Calu3 (cell line): ENCODE measurements at regions of chrX and their contacts with region 1.

Region 1: DNA sequence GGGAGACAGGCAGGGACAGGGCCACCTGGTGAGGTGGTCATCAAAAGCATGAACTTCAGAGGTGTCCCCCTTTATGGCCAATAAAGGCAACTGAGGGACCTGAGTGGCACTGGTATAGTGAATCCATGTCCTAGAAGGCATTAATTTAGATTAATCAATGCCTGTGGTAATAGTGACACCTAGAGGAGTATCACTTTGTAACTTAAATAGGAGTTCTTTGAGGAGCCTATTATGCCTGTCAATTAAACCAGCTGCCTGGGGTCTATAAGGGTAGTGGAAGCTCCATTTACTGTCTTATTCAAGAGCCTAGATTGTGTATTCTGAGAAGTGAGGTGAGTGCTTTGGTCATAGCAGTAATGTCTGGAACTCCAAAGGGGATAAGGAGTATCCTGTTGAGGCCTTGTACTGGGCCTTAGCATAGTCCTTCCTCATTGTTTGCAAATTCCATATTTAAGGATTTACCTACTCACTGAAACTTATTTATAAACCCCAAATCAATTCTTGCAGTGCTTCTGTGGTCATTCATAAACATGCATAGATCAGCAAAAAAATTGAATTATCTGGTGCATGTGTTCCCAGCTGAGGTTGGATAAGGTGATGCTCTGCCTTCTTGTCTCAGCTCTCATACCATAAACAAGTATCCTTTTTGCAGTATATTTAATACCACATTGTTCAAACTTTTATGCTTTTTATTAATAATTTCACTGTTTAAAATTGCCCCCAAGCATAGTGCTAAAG is 213.8 kb upstream of the RADX start:
- DNase-seq: no peak
- H3K4me3 Mint-ChIP-seq: no peak overlapping the region
- H3K27ac Mint-ChIP-seq: no peak overlapping the region
- H3K4me1 Mint-ChIP-seq: peaks cover 8% of the 10 kb centered on the region
- H3K27me3 Mint-ChIP-seq: no peaks in the 10 kb centered on the region
- CTCF ChIP-seq: peak; percentile 13

Region 2: DNA sequence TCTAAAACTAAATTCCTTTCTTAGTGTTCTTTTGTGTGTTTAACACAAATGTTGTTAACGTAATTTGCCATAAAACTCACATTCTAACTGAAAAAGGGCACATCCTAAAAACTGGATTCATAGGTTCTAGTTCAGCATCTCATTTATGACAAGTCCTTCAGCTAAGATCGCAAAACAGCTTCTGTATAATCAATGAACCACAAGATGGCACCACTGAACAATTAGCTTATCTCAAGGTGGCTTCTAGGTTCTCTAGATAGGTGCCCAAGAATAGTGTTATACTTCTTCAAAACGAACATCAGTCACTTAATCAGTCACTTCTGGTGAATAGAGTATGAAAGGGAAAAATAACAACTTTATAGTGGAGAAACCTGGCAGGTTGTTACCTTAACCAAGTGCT is 521.3 kb before region 1 on chrX:
- CTCF ChIA-PET with region 1: no interaction called
- intact Hi-C with region 1: loop called (anchors 5 kb)
- DNase-seq: no peak
- H3K4me3 Mint-ChIP-seq: no peak overlapping the region
- H3K27ac Mint-ChIP-seq: no peak overlapping the region
- H3K4me1 Mint-ChIP-seq: no peaks in the 10 kb centered on the region
- H3K27me3 Mint-ChIP-seq: no peaks in the 10 kb centered on the region
- CTCF ChIP-seq: no peak

Region 3: DNA sequence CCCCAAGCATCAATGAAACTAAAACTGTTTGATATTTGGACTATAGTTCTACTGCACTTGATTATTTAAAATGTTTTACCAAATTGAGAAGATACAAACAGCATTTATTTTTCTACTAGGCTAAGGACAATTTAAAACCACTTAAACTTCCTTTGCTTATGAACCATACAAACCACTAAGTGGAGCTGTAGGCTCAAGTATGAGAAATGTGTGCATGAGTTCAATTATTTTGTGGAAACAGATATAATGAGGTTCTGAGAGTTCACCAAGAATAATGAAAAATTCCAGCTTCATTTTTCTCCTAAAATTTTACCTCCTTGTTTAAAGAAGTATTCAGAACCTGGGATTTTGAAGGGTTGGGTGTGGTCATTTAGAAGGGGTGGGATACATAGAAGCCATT is 422.6 kb before region 1 on chrX:
- CTCF ChIA-PET with region 1: no interaction called
- intact Hi-C with region 1: loop called (anchors 1 kb)
- DNase-seq: no peak
- H3K4me3 Mint-ChIP-seq: no peak overlapping the region
- H3K27ac Mint-ChIP-seq: no peak overlapping the region
- H3K4me1 Mint-ChIP-seq: no peaks in the 10 kb centered on the region
- H3K27me3 Mint-ChIP-seq: no peaks in the 10 kb centered on the region
- CTCF ChIP-seq: no peak

Region 4: DNA sequence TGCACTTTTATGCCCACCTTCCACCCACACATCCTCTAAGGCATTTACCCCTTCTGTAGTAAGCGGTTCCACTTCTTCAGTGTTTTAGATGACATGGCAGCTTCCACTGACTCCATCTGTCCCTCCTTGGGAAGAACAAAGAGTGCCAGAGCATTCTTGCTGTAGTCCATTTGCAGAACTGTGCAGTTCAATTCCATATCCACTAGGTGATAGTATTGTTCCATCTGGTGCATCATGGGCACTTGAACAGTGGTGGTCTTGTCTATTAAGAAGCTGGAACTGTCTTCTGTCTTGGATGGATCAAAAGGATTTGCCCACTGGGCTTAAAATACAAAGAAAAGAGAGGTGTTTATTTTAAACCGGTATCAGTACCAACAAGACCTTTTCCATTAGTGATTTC is 362.9 kb before region 1 on chrX:
- CTCF ChIA-PET with region 1: interaction called, 3 read pairs
- intact Hi-C with region 1: loop called (anchors 2 kb)
- DNase-seq: no peak
- H3K4me3 Mint-ChIP-seq: no peak overlapping the region
- H3K27ac Mint-ChIP-seq: no peak overlapping the region
- H3K4me1 Mint-ChIP-seq: no peaks in the 10 kb centered on the region
- H3K27me3 Mint-ChIP-seq: peaks cover 20% of the 10 kb centered on the region
- CTCF ChIP-seq: no peak

Region 5: GRCh38 chrX:106050054-106050453 is 347.9 kb before region 1 on chrX:
- CTCF ChIA-PET with region 1: no interaction called
- intact Hi-C with region 1: no loop called
- DNase-seq: no peak
- H3K4me3 Mint-ChIP-seq: no peak overlapping the region
- H3K27ac Mint-ChIP-seq: no peak overlapping the region
- H3K4me1 Mint-ChIP-seq: no peaks in the 10 kb centered on the region
- H3K27me3 Mint-ChIP-seq: no peaks in the 10 kb centered on the region
- CTCF ChIP-seq: no peak

Region 6: DNA sequence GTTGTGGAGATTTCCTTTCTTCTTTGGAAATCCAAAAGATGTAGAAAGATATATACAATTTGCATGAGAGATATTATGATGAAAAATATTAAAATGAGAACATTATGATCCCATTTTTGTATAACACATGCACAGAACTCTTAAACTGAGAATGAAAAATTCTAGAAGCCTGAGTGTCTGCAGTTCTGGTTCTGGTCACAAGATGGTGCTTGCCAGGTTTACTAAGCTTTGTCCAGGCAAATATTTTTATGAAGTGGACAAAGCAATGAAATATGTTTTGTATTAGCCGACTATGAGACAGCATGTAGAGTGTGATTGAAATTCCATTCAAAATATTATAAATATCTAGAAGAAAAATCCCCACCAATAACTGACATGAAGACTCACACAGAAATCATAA is 227.7 kb before region 1 on chrX:
- CTCF ChIA-PET with region 1: no interaction called
- intact Hi-C with region 1: loop called (anchors 1 kb)
- DNase-seq: peak; percentile 12
- H3K4me3 Mint-ChIP-seq: no peak overlapping the region
- H3K27ac Mint-ChIP-seq: no peak overlapping the region
- H3K4me1 Mint-ChIP-seq: peaks cover 8% of the 10 kb centered on the region
- H3K27me3 Mint-ChIP-seq: peaks cover 15% of the 10 kb centered on the region
- CTCF ChIP-seq: peak; percentile 35

Region 7: DNA sequence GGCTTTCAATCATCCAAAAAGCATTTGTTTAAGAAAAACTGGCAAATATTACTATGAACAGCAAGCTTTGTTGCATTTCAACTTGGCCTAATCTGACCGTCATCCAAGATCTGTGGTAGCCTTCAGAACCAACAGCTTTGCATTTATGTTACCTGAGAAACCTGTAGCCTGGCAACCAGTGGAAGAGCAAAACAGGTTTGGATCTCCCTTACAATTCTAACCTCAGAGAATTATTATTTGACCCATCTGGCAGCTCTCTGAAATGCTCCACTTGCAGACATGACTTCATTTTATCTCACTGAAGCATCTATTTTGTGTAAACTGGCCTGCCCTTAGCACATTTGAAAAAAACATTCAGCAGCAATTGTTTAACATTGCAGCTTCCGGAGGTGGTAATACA is 80.2 kb before region 1 on chrX:
- CTCF ChIA-PET with region 1: no interaction called
- intact Hi-C with region 1: no loop called
- DNase-seq: no peak
- H3K4me3 Mint-ChIP-seq: no peak overlapping the region
- H3K27ac Mint-ChIP-seq: no peak overlapping the region
- H3K4me1 Mint-ChIP-seq: peaks cover 8% of the 10 kb centered on the region
- H3K27me3 Mint-ChIP-seq: no peaks in the 10 kb centered on the region
- CTCF ChIP-seq: no peak

Region 8: DNA sequence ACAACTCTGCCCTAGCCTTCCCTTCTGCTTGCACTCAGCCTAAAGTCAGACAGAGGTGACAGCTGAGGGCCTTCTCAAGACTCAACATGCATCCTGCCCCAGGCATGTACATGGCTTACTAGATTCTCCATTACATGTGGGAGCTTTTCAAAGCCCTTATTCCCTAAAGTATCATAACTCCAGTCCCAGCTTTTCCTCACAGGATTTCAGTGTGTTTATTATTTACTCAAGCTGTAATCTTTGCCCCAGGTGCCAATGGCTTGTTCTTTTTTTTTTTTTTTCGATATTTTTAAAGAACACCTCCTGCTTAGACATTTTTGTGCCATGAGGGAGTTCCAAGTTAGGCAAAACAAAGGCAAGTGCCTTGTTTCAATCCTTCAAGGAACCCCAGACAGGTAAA is 59.8 kb after region 1 on chrX:
- CTCF ChIA-PET with region 1: no interaction called
- intact Hi-C with region 1: no loop called
- DNase-seq: no peak
- H3K4me3 Mint-ChIP-seq: no peak overlapping the region
- H3K27ac Mint-ChIP-seq: no peak overlapping the region
- H3K4me1 Mint-ChIP-seq: no peaks in the 10 kb centered on the region
- H3K27me3 Mint-ChIP-seq: peaks cover 16% of the 10 kb centered on the region
- CTCF ChIP-seq: no peak

Region 9: DNA sequence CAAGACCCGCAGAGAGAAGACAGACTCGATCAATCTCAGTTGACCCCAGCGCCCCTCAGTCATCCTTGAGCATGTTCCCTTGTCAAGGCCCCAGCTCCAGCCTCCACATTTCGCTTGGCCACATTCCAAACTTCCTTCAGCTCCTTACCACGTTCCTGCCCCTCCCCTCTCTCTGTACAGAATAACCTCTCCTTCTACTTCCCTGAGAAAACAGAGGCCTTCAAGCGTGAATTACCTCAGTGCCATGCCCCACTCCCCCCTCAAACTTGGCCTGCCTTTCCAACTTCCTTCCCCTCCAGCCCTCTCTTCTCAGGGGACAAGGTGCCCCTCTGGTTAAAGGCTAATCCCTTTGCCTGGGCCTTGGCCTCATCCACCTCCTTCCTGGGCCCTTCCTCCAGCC is 508.4 kb after region 1 on chrX:
- CTCF ChIA-PET with region 1: no interaction called
- intact Hi-C with region 1: no loop called
- DNase-seq: peak; percentile 29
- H3K4me3 Mint-ChIP-seq: no peak overlapping the region
- H3K27ac Mint-ChIP-seq: peak overlapping the region; percentile 37
- H3K4me1 Mint-ChIP-seq: peaks cover 41% of the 10 kb centered on the region
- H3K27me3 Mint-ChIP-seq: no peaks in the 10 kb centered on the region
- CTCF ChIP-seq: no peak